Activated CD4-positive, alpha-beta T cell treated with anti-CD3 and anti-CD28 coated beads for 36 hours (primary cell): ENCODE measurements at regions of chr1 and their contacts with region 1.

Region 1: DNA sequence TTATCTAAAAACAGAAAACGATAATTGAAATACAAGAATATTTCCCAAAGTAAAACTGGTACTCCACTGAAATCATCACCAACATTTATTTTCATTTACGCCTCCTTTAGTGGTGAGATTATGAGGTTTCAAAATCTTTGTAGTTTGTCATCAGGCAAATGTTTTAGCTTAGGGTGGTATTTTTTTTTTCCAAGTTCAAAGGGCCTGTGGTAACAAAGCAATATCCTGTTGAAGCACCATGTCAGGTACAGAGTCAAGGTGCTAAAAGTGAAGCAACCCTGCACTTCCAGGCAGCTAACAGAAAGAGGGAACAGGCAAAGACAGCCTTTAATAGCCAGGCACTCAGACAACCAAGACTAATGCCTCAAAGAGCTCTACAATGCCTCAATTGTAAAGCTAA is 89.2 kb downstream of the JAK1 start:
- DNase-seq: peak; percentile 43
- ATAC-seq: peak; percentile 88
- H3K4me3 Mint-ChIP-seq: peak overlapping the region; percentile 4
- H3K27ac Mint-ChIP-seq: peak overlapping the region; percentile 35
- H3K4me1 Mint-ChIP-seq: peaks cover 60% of the 10 kb centered on the region
- H3K27me3 Mint-ChIP-seq: no peaks in the 10 kb centered on the region

Region 2: DNA sequence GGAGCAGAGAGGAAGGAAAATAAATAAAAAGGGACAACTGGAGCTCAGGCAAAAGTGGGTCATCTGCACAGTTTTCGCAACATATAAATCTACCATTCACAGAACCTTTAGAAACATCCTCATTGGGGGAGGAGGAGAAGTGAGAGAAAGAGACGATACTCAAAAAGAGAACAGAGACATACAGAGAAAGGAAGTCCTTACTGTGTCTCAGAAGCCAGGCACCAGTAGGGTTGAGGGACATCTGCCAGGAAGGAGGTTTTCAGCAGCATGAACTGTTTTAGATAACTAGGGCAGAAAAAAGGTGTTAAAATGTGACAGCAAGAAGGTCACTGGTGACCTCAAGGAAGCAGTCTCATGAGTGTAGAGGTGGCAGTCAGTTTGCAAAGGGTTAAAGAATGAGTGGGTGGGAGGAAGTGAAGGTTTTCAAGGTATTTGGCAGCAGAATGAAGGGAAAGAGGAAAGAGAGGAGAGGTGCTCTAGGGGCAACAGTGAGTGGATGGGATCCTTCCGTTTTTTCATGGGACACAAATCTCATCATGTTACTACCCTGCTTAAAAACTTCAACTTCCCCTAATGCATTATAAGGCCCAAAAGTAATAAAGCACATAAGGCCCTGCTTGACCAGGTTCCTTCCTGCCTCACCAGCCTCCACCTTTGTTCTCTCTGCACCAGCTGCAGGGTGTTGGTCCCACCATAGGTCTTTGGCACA is 79.7 kb after region 1 on chr1:
- CTCF ChIA-PET with region 1: interaction called, 3 read pairs
- POLR2A ChIA-PET with region 1: interaction called, 4 read pairs
- intact Hi-C with region 1: loop called in 1 of 2 experiments (anchors 5 kb)
- DNase-seq: peak; percentile 75
- ATAC-seq: peak; percentile 87
- H3K4me3 Mint-ChIP-seq: no peak overlapping the region
- H3K27ac Mint-ChIP-seq: no peak overlapping the region
- H3K4me1 Mint-ChIP-seq: peaks cover 61% of the 10 kb centered on the region
- H3K27me3 Mint-ChIP-seq: no peaks in the 10 kb centered on the region